GM12878 (cell line): ENCODE measurements at regions of chr9 and their contacts with region 1.

Region 1: DNA sequence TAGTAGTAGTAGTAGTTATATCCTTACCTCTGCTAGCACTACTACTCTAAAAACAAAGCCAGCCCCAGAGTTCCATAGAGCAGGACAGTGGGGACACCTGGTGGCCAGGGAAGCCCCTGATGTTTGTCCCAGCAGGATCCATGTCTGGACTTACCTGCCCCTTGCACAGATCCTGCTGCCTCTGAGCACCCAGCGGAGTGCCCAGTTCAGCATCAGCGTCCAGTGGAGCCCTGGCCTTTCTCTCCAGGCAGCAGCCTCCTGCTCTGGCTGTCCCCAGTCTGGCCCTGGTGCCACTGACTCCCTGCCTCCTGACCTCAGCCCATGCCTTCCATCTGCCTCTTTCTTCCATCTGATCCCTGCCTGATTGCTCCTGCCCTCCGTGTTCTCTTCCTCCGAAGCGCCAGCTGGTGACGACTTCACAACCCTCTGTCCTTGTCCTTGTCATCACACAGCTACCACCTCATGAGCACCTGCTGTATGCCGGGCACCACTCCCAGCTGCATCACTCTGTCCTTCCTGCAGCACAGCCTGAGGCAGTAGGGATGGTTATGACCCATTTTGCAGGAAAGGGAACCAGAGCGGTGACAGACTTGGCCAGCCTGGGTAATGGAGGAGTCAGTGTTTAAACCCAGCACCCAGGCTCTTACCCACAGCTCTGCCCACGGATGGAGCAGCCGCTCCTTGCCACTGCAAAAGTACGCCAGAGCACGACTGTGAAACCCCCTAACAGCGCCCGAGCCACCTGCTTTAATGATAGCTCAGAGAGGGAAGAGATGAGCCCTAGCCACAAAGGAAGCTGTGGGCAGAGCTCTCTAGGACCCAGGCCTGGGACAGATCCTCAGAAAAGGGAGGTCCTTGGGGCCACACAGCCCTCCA is 11.5 kb downstream of the SARDH start:
- DNase-seq: no peak
- ATAC-seq: peak; percentile 62
- H3K4me3 ChIP-seq: no peak overlapping the region
- H3K27ac ChIP-seq: no peak overlapping the region
- H3K4me1 ChIP-seq: no peaks in the 10 kb centered on the region
- H3K27me3 ChIP-seq: no peaks in the 10 kb centered on the region; a peak in 2 of 4 replicates
- CTCF ChIP-seq: peak; percentile 29 to 54 (median 45); a peak in 3 of 6 replicates
- EP300 ChIP-seq: no peak
- POLR2A ChIP-seq: no peak
- RAD21 ChIP-seq: peak; percentile 66

Region 2: GRCh38 chr9:133532937-133533668 is 193.5 kb before region 1 on chr9:
- CTCF ChIA-PET with region 1: interaction called, 4 read pairs
- POLR2A ChIA-PET with region 1: no interaction called
- RAD21 ChIA-PET with region 1: interaction called, 5 read pairs
- SMC1A ChIA-PET with region 1: no interaction called
- in situ Hi-C with region 1: no loop called
- intact Hi-C with region 1: loop called (anchors 2 kb)
- DNase-seq: peak; percentile 15
- ATAC-seq: peak; percentile 83
- H3K4me3 ChIP-seq: no peak overlapping the region
- H3K27ac ChIP-seq: no peak overlapping the region
- H3K4me1 ChIP-seq: no peaks in the 10 kb centered on the region
- H3K27me3 ChIP-seq: peaks cover 8 to 10% of the 10 kb centered on the region in 2 experiments; a peak in 3 of 4 replicates
- CTCF ChIP-seq: peak; percentile 57 to 69 (median 65)
- EP300 ChIP-seq: no peak
- POLR2A ChIP-seq: no peak
- RAD21 ChIP-seq: peak; percentile 71

Region 3: DNA sequence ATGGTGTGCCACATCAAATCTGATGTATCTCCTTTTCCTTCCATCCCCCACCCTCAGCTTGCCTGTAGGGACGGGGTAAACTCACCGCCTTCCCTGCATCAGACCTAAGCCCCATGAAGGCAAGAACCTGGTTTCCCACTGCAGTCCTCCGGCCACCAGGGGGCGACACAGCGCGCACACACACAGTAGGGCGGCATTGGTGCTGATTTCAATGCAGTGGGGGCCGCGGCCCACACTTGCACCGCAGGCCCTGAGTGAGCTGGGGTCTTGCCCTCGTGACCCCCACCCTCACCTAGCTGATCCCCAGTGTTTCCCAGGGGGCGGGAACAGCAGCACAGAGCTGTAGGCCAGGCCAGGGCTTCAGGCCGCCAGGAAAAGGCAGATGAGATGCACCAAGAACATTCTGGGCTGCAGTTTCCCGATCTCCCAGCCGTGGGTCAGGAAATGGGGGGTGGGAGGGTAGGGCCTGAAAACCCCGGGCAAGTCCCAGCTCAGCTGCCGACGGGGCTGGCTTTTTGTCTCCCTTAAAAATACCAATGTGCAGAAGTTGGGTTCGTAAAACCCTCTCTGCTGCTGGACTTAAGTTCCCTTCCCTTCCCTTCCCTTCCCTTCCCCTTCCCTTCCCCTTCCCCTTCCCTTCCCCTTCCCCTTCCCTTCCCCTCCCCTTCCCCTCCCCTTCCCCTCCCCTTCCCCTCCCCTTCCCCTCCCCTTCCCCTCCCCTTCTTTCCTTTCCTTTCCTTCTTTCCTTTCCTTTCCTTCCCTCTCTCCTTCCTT is 137.0 kb before region 1 on chr9:
- CTCF ChIA-PET with region 1: interaction called, 3 read pairs
- POLR2A ChIA-PET with region 1: no interaction called
- RAD21 ChIA-PET with region 1: no interaction called
- SMC1A ChIA-PET with region 1: no interaction called
- in situ Hi-C with region 1: no loop called
- intact Hi-C with region 1: loop called (anchors 10 kb)
- DNase-seq: no peak
- ATAC-seq: no peak
- H3K4me3 ChIP-seq: no peak overlapping the region
- H3K27ac ChIP-seq: no peak overlapping the region
- H3K4me1 ChIP-seq: no peaks in the 10 kb centered on the region
- H3K27me3 ChIP-seq: peaks cover 8% of the 10 kb centered on the region in 2 experiments; a peak in 3 of 4 replicates
- CTCF ChIP-seq: peak; percentile 40 to 64 (median 60)
- EP300 ChIP-seq: no peak
- POLR2A ChIP-seq: no peak
- RAD21 ChIP-seq: 0 out of 2 replicates have a peak, but pooled peaks have one; percentile 21

Region 4: GRCh38 chr9:133742849-133743444 is 16.3 kb after region 1 on chr9:
- CTCF ChIA-PET with region 1: interaction called, 10 read pairs
- POLR2A ChIA-PET with region 1: no interaction called
- RAD21 ChIA-PET with region 1: no interaction called
- SMC1A ChIA-PET with region 1: no interaction called
- in situ Hi-C with region 1: no loop called
- intact Hi-C with region 1: no loop called
- DNase-seq: peak; percentile 23
- ATAC-seq: peak; percentile 92
- H3K4me3 ChIP-seq: no peak overlapping the region
- H3K27ac ChIP-seq: no peak overlapping the region
- H3K4me1 ChIP-seq: no peaks in the 10 kb centered on the region
- H3K27me3 ChIP-seq: peaks cover 0 to 2% of the 10 kb centered on the region in 2 experiments; a peak in 1 of 4 replicates
- CTCF ChIP-seq: peak; percentile 97 to 99 (median 99)
- EP300 ChIP-seq: no peak
- POLR2A ChIP-seq: no peak
- RAD21 ChIP-seq: peak; percentile 63